Sigmoid colon (tissue), 7 donors: ENCODE measurements at regions of chr19 and their contacts with region 1.

Region 1: GRCh38 chr19:41930926-41931592 is 2.8 kb upstream of the ERFL start:
- DNase-seq: no peak
- H3K4me3 ChIP-seq: no peak overlapping the region
- H3K27ac ChIP-seq: no peak overlapping the region
- H3K4me1 ChIP-seq: peaks cover 0 to 23% (median 22%) of the 10 kb centered on the region in 4 donors
- H3K27me3 ChIP-seq: peaks cover 62 to 100% (median 91%) of the 10 kb centered on the region in 3 donors
- CTCF ChIP-seq: no peak
- EP300 ChIP-seq: no peak
- POLR2A ChIP-seq: no peak

Region 2: DNA sequence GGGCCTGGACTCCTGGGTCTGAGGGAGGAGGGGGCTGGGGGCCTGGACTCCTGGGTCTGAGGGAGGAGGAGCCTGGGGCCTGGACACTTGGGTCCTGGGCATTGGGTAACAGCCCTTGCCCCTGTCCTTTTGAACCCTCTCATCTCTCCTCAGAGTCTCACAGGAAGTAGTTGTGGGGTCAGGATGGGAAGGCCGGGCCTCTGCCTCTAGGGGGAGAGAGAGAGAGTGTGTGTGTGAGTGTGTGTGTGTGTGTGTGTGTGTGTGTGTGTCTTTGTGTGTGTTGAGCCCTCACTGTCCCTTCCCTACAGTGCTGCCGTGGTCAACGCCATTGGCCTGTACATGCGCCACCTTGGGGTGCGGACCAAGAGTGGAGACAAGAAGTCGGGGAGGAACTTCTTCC is 37.2 kb before region 1 on chr19:
- intact Hi-C with region 1: loop called (anchors 2 kb)
- DNase-seq: no peak
- H3K4me3 ChIP-seq: no peak overlapping the region
- H3K27ac ChIP-seq: no peak overlapping the region
- H3K4me1 ChIP-seq: no peaks in the 10 kb centered on the region
- H3K27me3 ChIP-seq: no peaks in the 10 kb centered on the region
- CTCF ChIP-seq: no peak
- EP300 ChIP-seq: no peak
- POLR2A ChIP-seq: no peak